Activated CD4-positive, alpha-beta T cell treated with anti-CD3 and anti-CD28 coated beads, Interleukin-2, amount 10 ng/mL, durations not matched to agents 7 days and 5 days (primary cell): ENCODE measurements at regions of chr16 and their contacts with region 1.

Region 1: GRCh38 chr16:67816240-67817031 is 9.7 kb downstream of the TSNAXIP1 start:
- DNase-seq: peak; percentile 90
- H3K4me3 Mint-ChIP-seq: no peak overlapping the region
- H3K27ac Mint-ChIP-seq: no peak overlapping the region
- H3K4me1 Mint-ChIP-seq: peaks cover 7% of the 10 kb centered on the region
- H3K27me3 Mint-ChIP-seq: no peaks in the 10 kb centered on the region

Region 2: GRCh38 chr16:67672739-67673662 is 143.4 kb before region 1 on chr16:
- CTCF ChIA-PET with region 1: interaction called, 15 read pairs
- POLR2A ChIA-PET with region 1: no interaction called
- DNase-seq: peak; percentile 74
- H3K4me3 Mint-ChIP-seq: no peak overlapping the region
- H3K27ac Mint-ChIP-seq: no peak overlapping the region
- H3K4me1 Mint-ChIP-seq: peaks cover 11% of the 10 kb centered on the region
- H3K27me3 Mint-ChIP-seq: no peaks in the 10 kb centered on the region

Region 3: DNA sequence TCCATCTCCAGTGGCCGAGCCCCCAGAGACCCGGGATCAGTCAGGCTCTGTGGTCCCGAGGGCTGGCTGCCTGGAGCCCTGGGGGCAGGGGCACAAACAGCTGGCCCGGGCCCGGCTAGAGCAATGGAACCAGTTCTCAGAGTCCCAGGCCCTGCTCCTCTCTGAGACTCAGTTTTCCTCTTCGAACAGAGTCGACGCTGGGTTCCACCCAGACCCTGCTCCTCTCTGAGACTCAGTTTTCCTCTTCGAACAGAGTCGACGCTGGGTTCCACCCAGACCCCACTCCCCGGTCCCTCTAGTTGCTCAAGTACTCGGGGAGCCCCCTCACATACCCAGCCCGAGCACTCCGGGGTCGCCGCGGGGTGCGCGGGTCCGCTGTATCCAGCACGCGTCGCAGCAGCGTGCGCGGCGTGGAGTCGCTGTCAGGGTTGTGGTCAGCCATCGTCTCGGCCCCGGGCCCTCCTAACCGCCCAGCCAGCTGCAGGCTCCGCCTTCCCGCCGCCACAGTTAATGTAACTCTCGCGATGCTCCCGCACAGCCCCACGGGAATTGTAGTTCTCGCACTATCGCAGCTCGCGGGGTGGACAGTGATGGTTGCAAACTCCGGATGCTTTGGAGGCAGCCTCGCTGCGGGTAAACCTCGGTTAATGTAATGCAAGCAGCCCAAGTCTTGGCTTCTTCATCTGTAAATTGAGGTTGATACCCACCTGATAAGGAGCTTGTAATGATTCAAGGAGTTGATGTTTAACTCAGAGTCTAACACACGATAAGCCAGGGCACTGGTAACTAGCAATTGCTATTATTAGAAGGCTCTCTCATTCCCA is 17.2 kb after region 1 on chr16:
- CTCF ChIA-PET with region 1: interaction called, 49 read pairs
- POLR2A ChIA-PET with region 1: interaction called, 3 read pairs
- DNase-seq: peak; percentile 96
- H3K4me3 Mint-ChIP-seq: peak overlapping the region; percentile 80
- H3K27ac Mint-ChIP-seq: peak overlapping the region; percentile 79
- H3K4me1 Mint-ChIP-seq: peaks cover 15% of the 10 kb centered on the region
- H3K27me3 Mint-ChIP-seq: no peaks in the 10 kb centered on the region

Region 4: DNA sequence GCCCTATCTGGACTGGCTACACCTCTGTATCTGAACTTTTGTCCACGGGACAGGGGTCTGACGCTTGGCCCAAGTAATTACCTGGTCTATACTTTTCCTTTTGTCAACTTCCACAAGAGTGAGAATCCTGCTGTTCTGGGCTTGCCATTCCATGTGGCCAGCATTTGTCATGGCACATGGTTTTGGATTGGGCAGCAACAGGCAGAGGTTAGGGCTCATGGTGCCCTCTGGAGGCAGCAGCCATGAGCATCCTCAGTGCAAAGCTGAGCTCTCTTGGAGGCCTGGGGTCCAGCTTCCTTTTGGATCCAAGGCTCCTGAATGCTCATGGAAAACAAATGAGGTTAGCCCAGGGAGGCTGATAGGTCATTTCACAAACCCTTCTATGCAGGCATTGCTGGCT is 48.9 kb after region 1 on chr16:
- CTCF ChIA-PET with region 1: interaction called, 24 read pairs
- POLR2A ChIA-PET with region 1: no interaction called
- DNase-seq: peak; percentile 36
- H3K4me3 Mint-ChIP-seq: no peak overlapping the region
- H3K27ac Mint-ChIP-seq: no peak overlapping the region
- H3K4me1 Mint-ChIP-seq: peaks cover 5% of the 10 kb centered on the region
- H3K27me3 Mint-ChIP-seq: no peaks in the 10 kb centered on the region

Region 5: DNA sequence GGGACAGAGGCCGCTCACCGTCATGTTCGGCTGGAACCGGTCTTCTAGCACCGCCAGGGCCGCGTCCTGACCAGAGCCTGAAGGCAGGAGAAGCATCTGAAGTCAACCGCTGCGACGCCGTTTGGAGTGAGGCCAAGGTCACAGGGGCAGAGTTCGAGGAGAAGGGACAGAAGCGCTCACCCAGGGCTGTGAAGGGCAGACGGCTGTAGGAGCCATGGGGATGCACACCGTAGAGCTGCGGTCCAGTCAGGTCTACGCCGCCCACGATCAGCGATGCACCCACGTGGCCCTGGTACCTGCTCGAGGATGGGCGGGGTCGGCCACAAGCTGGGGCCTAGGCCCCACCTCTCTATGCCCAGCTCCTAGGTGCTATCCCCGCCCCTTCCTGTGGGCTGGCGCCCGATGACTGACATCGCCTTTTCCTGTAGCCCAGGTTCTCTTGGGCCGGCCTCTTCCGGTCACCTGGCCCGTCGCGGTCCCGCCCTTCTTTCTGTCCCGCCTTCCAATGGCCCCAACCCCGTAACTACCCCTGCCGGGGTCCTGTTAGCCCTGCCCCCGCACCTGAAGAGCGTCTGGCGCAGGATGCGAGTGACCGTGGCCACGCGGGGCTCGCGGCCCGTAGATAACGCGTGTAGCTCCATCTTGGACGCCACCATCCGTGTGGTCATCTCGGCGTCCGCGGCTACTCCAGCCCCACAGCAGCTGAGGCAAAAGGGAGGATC is 119.1 kb after region 1 on chr16:
- CTCF ChIA-PET with region 1: interaction called, 23 read pairs
- POLR2A ChIA-PET with region 1: no interaction called
- DNase-seq: peak; percentile 97
- H3K4me3 Mint-ChIP-seq: peak overlapping the region; percentile 99
- H3K27ac Mint-ChIP-seq: peak overlapping the region; percentile 93
- H3K4me1 Mint-ChIP-seq: peaks cover 45% of the 10 kb centered on the region
- H3K27me3 Mint-ChIP-seq: no peaks in the 10 kb centered on the region

Region 6: DNA sequence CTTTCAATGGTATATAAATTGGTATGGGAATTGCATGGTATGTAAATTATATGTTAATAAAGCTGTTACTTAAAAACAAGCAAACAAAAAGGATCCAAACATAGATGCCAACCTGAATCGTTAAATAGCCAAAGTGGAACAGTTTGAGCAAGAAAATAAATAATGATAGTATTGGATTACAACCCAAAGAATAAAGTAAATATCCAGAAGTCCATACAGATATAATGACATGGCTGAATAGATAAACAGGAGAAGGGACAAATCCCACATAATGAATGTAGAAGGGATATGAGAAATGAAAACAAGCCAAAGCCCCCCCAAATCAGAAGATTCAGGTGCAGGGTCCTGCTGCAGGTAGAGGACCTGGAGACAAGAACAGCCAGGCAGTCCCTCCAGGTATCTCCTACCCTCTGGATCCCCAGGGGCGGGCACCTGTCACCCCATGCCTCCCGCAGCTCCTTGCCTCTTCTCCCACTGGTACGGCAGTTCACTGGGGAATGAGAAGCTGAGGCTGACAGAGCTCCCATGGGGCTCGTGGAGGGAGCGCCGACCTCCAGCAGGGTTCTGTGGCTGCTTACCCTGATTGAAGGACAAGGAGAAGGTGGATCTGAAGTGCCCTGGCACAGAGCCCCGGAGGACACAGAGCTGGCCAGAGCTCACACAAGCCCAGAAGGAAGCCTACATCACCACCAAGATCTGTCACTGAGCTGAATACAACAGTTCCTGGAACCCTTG is 137.4 kb after region 1 on chr16:
- CTCF ChIA-PET with region 1: no interaction called
- POLR2A ChIA-PET with region 1: no interaction called
- DNase-seq: no peak
- H3K4me3 Mint-ChIP-seq: no peak overlapping the region
- H3K27ac Mint-ChIP-seq: no peak overlapping the region
- H3K4me1 Mint-ChIP-seq: peaks cover 4% of the 10 kb centered on the region
- H3K27me3 Mint-ChIP-seq: no peaks in the 10 kb centered on the region